CD8-positive, alpha-beta T cell (primary cell): ENCODE measurements at regions of chr10 and their contacts with region 1.

Region 1: GRCh38 chr10:80453701-80454513 is at the start of gene TSPAN14:
- DNase-seq: peak; percentile 32 to 88 (median 73)
- ATAC-seq: peak; percentile 65
- H3K4me3 ChIP-seq: peak within 1 kb of the TSS; percentile 75 to 92
- H3K4me3 Mint-ChIP-seq: peak within 1 kb of the TSS; percentile 99
- H3K27ac ChIP-seq: peak within 1 kb of the TSS; percentile 53 to 74
- H3K27ac Mint-ChIP-seq: peak within 1 kb of the TSS; percentile 98
- H3K4me1 ChIP-seq: peaks cover 42% of the 10 kb centered on the region
- H3K4me1 Mint-ChIP-seq: peaks cover 41% of the 10 kb centered on the region
- H3K27me3 ChIP-seq: no peaks in the 10 kb centered on the region
- H3K27me3 Mint-ChIP-seq: no peaks in the 10 kb centered on the region
- CTCF ChIP-seq: no peak
- total RNA-seq, gene TSPAN14: 63.9 to 66.1 TPM

Region 2: DNA sequence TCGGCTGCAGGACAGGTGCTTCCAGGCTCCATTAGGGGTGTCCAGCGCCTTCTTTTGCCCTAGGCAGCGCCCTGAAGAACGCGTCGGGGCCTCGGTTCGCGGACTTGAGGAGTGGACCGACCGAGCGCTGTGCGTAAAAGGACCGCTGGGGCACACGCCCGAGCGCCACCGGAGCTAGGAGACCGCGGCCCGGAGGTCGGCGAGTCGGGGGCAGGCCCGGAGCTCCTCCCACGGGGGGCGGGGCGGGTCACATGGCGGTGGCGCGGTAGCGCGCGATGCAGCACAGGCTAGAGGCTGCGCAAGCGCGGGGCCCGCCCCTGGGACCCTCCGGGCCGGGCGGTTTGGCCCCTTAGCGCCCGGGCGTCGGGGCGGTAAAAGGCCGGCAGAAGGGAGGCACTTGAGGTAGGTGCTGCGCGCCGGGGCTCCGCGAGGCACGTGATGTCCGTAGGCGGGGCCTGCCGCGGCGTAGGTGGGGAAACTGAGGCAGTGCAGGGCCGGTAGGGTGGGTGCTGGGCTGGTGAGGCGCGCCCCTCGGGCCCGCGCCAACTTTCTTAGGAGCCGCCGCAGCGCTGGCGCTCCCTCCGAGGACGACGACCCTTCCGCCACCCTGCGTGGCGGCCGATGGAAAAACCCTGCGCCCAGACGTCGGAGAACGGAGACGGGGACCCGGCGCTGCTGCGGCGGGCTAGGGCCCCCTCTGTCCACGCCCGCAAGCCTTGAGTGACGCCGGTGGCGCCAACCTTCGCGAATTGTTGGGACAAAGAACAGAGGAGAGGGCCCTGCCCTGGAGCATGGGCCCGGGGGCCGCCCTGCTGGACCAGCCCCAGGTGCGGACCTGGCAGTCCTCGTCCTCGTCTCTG is 45.4 kb before region 1 on chr10 and contains the start of gene PRXL2A:
- CTCF ChIA-PET with region 1: no interaction called
- POLR2A ChIA-PET with region 1: no interaction called
- intact Hi-C with region 1: loop called (anchors 1 to 5 kb)
- DNase-seq: peak; percentile 52 to 87 (median 82)
- ATAC-seq: peak; percentile 96
- H3K4me3 ChIP-seq: peak within 1 kb of the TSS; percentile 65 to 70
- H3K4me3 Mint-ChIP-seq: peak within 1 kb of the TSS; percentile 91
- H3K27ac ChIP-seq: peak within 1 kb of the TSS in 1 of 2 experiments; percentile 39
- H3K27ac Mint-ChIP-seq: peak within 1 kb of the TSS; percentile 77
- H3K4me1 ChIP-seq: peaks cover 4% of the 10 kb centered on the region
- H3K4me1 Mint-ChIP-seq: peaks cover 32% of the 10 kb centered on the region
- H3K27me3 ChIP-seq: peaks cover 0 to 3% of the 10 kb centered on the region in 2 experiments
- H3K27me3 Mint-ChIP-seq: no peaks in the 10 kb centered on the region
- CTCF ChIP-seq: no peak
- total RNA-seq, gene PRXL2A: 4.6 to 5.1 TPM

Region 3: GRCh38 chr10:80464557-80465450 is 10.9 kb after region 1 on chr10:
- CTCF ChIA-PET with region 1: interaction called, 312 read pairs
- POLR2A ChIA-PET with region 1: interaction called, 36 read pairs
- intact Hi-C with region 1: loop called (anchors 1 to 2 kb)
- DNase-seq: peak in 3 of 9 experiments; percentile 32 to 60 (median 41)
- ATAC-seq: peak; percentile 2
- H3K4me3 ChIP-seq: peak overlapping the region; percentile 25 to 30
- H3K4me3 Mint-ChIP-seq: peak overlapping the region; percentile 77
- H3K27ac ChIP-seq: peak overlapping the region; percentile 49 to 81
- H3K27ac Mint-ChIP-seq: peak overlapping the region; percentile 98
- H3K4me1 ChIP-seq: peaks cover 94% of the 10 kb centered on the region
- H3K4me1 Mint-ChIP-seq: peaks cover 96% of the 10 kb centered on the region
- H3K27me3 ChIP-seq: no peaks in the 10 kb centered on the region
- H3K27me3 Mint-ChIP-seq: no peaks in the 10 kb centered on the region
- CTCF ChIP-seq: no peak

Region 4: DNA sequence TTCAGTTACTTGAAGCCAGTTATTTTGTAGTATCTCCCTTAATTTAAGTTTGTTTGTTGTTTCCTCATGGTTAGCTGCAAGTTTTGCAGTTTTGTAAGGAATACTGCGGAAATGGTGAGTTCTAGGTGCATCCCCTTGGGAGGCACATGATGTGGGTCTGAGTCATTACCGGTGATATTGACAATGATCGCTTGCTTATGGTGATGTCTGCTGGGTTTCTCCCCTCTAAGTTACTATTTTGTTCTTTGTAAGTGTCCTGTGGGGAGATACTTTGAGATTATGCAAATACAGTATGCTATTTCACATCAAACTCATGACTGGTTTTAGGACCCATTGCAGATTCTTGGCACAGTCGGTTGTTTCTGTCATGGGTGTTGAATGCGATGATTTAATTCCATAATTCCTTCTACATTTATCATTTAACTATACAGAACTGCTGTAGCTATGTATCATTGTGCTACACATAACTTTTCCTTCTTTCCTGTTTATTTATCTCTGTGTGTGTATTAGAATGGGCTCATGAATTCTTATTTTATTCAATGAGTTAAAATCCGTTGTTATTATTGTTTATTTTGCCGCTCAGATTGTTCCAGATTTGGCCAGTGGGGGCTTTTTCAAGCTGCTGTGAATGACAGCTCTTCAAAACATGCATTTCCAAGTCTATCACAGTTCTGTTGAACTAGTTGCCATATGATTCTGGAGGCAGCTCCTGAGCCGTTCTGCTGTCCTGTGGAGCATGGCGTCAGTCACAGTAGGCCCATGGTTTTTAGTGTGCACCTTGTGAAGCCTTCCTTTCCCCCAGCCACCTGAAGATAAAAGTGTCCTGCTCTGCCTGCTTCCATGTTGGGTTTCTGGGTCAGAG is 18.6 kb after region 1 on chr10:
- CTCF ChIA-PET with region 1: interaction called, 312 read pairs
- POLR2A ChIA-PET with region 1: interaction called, 36 read pairs
- intact Hi-C with region 1: loop called (anchors 1 to 2 kb)
- DNase-seq: peak in 4 of 9 experiments; percentile 45 to 82 (median 60)
- ATAC-seq: peak; percentile 62
- H3K4me3 ChIP-seq: peak overlapping the region in 1 of 2 experiments; percentile 23
- H3K4me3 Mint-ChIP-seq: peak overlapping the region; percentile 60
- H3K27ac ChIP-seq: peak overlapping the region; percentile 16 to 81
- H3K27ac Mint-ChIP-seq: peak overlapping the region; percentile 97
- H3K4me1 ChIP-seq: peaks cover 83% of the 10 kb centered on the region
- H3K4me1 Mint-ChIP-seq: peaks cover 92% of the 10 kb centered on the region
- H3K27me3 ChIP-seq: no peaks in the 10 kb centered on the region
- H3K27me3 Mint-ChIP-seq: no peaks in the 10 kb centered on the region
- CTCF ChIP-seq: no peak

Region 5: DNA sequence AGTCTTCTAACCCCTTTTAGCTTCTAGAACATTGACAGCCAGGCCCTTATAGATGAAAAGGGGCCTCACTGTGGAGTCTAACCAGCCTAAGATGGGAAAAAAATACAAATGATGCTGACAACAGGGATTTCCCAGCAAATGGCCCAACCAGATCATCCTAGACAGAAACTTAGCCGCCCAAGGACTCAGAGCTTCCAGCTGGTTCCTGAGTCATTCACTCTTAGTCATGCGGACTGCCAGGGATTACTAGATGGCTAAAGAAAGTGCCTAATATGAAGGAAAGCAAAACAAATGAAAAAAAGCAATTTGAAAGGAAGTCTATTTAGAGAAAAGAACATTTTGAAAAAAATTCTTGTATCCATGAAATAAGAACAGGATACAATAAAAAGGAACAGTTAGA is 23.9 kb after region 1 on chr10:
- CTCF ChIA-PET with region 1: interaction called, 312 read pairs
- POLR2A ChIA-PET with region 1: interaction called, 10 read pairs
- intact Hi-C with region 1: loop called in 1 of 2 experiments (anchors 2 kb)
- DNase-seq: peak in 1 of 9 experiments; percentile 21
- ATAC-seq: no peak
- H3K4me3 ChIP-seq: no peak overlapping the region
- H3K4me3 Mint-ChIP-seq: no peak overlapping the region
- H3K27ac ChIP-seq: peak overlapping the region in 1 of 2 experiments; percentile 39
- H3K27ac Mint-ChIP-seq: peak overlapping the region; percentile 82
- H3K4me1 ChIP-seq: peaks cover 61% of the 10 kb centered on the region
- H3K4me1 Mint-ChIP-seq: peaks cover 79% of the 10 kb centered on the region
- H3K27me3 ChIP-seq: no peaks in the 10 kb centered on the region
- H3K27me3 Mint-ChIP-seq: no peaks in the 10 kb centered on the region
- CTCF ChIP-seq: no peak

Region 6: GRCh38 chr10:80487791-80488538 is 34.1 kb after region 1 on chr10:
- CTCF ChIA-PET with region 1: interaction called, 227 read pairs
- POLR2A ChIA-PET with region 1: interaction called, 58 read pairs
- intact Hi-C with region 1: loop called (anchors 2 to 5 kb)
- DNase-seq: peak in 8 of 9 experiments; percentile 55 to 87 (median 74)
- ATAC-seq: peak; percentile 68
- H3K4me3 ChIP-seq: peak overlapping the region; percentile 15 to 29
- H3K4me3 Mint-ChIP-seq: peak overlapping the region; percentile 77
- H3K27ac ChIP-seq: peak overlapping the region; percentile 24 to 75
- H3K27ac Mint-ChIP-seq: peak overlapping the region; percentile 92
- H3K4me1 ChIP-seq: peaks cover 98% of the 10 kb centered on the region
- H3K4me1 Mint-ChIP-seq: peaks cover 96% of the 10 kb centered on the region
- H3K27me3 ChIP-seq: no peaks in the 10 kb centered on the region
- H3K27me3 Mint-ChIP-seq: no peaks in the 10 kb centered on the region
- CTCF ChIP-seq: no peak

Region 7: GRCh38 chr10:80498833-80499741 is 45.2 kb after region 1 on chr10:
- CTCF ChIA-PET with region 1: interaction called, 562 read pairs
- POLR2A ChIA-PET with region 1: interaction called, 42 read pairs
- intact Hi-C with region 1: loop called in 1 of 2 experiments (anchors 2 kb)
- DNase-seq: peak in 7 of 9 experiments; percentile 27 to 66 (median 55)
- ATAC-seq: peak; percentile 39
- H3K4me3 ChIP-seq: peak overlapping the region; percentile 12 to 29
- H3K4me3 Mint-ChIP-seq: peak overlapping the region; percentile 74
- H3K27ac ChIP-seq: peak overlapping the region; percentile 11 to 84
- H3K27ac Mint-ChIP-seq: peak overlapping the region; percentile 96
- H3K4me1 ChIP-seq: peaks cover 98% of the 10 kb centered on the region
- H3K4me1 Mint-ChIP-seq: peaks cover 97% of the 10 kb centered on the region
- H3K27me3 ChIP-seq: no peaks in the 10 kb centered on the region
- H3K27me3 Mint-ChIP-seq: no peaks in the 10 kb centered on the region
- CTCF ChIP-seq: no peak